Activated CD8-positive, alpha-beta memory T cell treated with anti-CD3 and anti-CD28 coated beads, Interleukin-2, amount 10 ng/mL, durations not matched to agents 7 days and 5 days (primary cell): ENCODE measurements at regions of chr1 and their contacts with region 1.

Region 1: GRCh38 chr1:183655562-183656075 is 2.5 kb upstream of the APOBEC4 start:
- DNase-seq: peak; percentile 79
- ATAC-seq: peak; percentile 62
- H3K4me3 Mint-ChIP-seq: no peak overlapping the region
- H3K27ac Mint-ChIP-seq: no peak overlapping the region
- H3K4me1 Mint-ChIP-seq: peaks cover 37% of the 10 kb centered on the region
- H3K27me3 Mint-ChIP-seq: peaks cover 2% of the 10 kb centered on the region

Region 2: DNA sequence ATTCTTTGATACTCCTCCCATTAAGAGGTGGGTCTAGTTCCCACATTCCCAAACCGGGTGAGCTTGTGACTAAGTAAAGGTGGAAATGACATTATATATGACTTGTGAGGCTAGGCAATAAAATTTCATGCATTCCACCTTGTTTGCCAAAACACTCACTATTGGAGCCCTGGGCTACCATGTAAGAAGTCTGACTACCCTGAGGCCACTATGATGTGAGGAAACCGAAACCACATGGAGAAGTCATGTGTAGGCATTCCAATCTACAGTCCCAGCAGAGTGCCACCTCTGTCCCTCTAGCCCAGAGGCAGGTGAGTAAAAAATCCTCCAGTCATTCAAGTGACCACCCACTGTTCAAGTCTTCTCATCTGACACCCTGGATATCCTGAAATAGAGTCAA is 201.2 kb before region 1 on chr1:
- CTCF ChIA-PET with region 1: no interaction called
- DNase-seq: no peak
- ATAC-seq: no peak
- H3K4me3 Mint-ChIP-seq: no peak overlapping the region
- H3K27ac Mint-ChIP-seq: no peak overlapping the region
- H3K4me1 Mint-ChIP-seq: no peaks in the 10 kb centered on the region
- H3K27me3 Mint-ChIP-seq: peaks cover 23% of the 10 kb centered on the region

Region 3: DNA sequence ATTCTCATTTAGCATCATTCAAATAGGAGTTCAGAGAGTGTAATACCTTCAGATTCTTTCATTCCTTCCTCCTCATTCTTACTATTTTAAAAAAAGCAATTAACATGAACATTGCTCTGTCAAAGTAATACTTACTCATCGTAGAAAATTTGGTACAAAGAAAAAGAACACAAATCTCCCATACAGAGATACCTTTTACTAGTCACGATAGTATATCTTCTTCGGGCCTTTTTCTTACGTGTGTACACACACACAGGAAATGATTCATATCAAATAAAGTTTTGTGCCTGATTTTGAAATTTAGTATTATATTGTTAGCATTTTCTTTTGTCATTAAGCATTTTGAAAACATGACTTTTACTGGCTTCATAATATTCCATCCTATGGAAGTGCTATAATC is 118.2 kb before region 1 on chr1:
- CTCF ChIA-PET with region 1: no interaction called
- DNase-seq: no peak
- ATAC-seq: no peak
- H3K4me3 Mint-ChIP-seq: no peak overlapping the region
- H3K27ac Mint-ChIP-seq: no peak overlapping the region
- H3K4me1 Mint-ChIP-seq: peaks cover 8% of the 10 kb centered on the region
- H3K27me3 Mint-ChIP-seq: no peaks in the 10 kb centered on the region

Region 4: DNA sequence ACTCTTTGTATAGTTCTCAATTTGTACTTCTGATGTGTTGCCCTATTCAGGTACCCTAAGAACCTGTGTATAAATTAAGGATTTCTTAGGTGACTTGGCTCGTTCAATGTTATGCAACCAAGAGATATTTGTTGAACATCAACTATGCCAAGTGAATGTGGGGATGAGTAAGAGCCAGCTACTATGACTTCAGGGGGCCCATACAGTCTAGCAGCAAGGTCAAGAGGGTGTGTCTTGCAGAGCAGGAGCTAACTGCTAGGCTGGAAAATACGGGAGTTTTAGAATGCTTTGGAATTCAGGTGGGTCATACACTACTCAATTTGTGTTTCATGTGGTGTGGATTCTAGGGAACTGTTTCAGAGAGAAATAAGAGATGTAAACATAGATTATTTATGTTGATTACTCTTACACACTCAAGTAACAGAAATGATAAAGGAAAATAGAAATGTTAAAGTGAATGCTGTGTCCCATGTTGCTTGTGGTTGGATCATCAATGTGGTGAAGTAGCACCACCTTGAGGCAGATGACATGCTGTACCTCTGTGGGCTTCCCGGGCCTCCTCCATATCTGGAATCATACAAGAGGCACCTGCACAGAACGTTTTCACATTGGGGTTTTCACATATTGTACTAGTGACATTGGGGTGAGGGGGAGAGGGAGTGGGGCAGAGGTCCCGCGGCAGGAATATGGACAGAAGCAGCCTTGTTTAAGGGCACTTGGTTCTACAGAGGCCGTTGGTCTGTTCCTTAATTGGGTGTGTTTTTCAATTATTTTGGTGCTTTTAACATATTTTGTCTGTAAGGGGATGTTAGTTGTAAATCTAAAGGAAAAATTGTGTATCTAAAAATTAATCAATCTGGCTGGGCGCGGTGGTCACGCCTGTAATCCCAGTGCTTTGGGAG is 32.5 kb before region 1 on chr1:
- CTCF ChIA-PET with region 1: no interaction called
- DNase-seq: peak; percentile 64
- ATAC-seq: peak; percentile 85
- H3K4me3 Mint-ChIP-seq: no peak overlapping the region
- H3K27ac Mint-ChIP-seq: no peak overlapping the region
- H3K4me1 Mint-ChIP-seq: peaks cover 4% of the 10 kb centered on the region
- H3K27me3 Mint-ChIP-seq: no peaks in the 10 kb centered on the region

Region 5: GRCh38 chr1:183635606-183636333 is 19.8 kb before region 1 on chr1 and contains the start of gene ARPC5:
- CTCF ChIA-PET with region 1: interaction called, 38 read pairs
- DNase-seq: peak; percentile 97
- ATAC-seq: peak; percentile 94
- H3K4me3 Mint-ChIP-seq: peak within 1 kb of the TSS; percentile 98
- H3K27ac Mint-ChIP-seq: peak within 1 kb of the TSS; percentile 100
- H3K4me1 Mint-ChIP-seq: peaks cover 30% of the 10 kb centered on the region
- H3K27me3 Mint-ChIP-seq: peaks cover 19% of the 10 kb centered on the region
- total RNA-seq, gene ARPC5: 205 to 216 TPM

Region 6: DNA sequence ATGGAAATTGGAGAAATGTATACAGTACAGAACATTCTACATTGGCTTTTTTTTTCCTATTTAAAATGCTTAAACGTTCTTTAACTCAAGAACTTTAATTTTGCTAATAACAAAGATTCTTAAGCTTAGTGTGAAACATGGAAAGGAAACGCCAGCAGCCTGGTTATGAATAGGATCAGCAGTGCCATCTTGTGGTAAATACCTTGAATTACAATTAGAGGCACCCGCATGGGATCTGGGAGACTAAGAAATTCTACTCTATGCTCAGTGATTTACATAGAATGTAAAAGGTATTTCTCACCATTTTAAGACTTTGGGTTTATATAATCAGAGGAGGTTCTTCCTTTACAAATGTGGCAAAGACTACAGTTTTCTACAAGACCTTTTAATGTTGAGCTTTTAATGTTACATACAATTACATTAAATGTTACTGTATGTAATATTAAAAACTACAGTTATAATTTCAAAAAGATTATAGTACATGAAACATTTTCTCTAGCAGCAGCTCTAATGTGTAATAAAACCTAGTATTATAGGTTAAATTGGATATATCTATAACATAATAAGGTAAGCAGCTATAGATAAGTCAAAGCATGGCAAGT is 29.6 kb after region 1 on chr1:
- CTCF ChIA-PET with region 1: interaction called, 41 read pairs
- DNase-seq: no peak
- ATAC-seq: no peak
- H3K4me3 Mint-ChIP-seq: no peak overlapping the region
- H3K27ac Mint-ChIP-seq: no peak overlapping the region
- H3K4me1 Mint-ChIP-seq: peaks cover 6% of the 10 kb centered on the region
- H3K27me3 Mint-ChIP-seq: peaks cover 35% of the 10 kb centered on the region

Region 7: DNA sequence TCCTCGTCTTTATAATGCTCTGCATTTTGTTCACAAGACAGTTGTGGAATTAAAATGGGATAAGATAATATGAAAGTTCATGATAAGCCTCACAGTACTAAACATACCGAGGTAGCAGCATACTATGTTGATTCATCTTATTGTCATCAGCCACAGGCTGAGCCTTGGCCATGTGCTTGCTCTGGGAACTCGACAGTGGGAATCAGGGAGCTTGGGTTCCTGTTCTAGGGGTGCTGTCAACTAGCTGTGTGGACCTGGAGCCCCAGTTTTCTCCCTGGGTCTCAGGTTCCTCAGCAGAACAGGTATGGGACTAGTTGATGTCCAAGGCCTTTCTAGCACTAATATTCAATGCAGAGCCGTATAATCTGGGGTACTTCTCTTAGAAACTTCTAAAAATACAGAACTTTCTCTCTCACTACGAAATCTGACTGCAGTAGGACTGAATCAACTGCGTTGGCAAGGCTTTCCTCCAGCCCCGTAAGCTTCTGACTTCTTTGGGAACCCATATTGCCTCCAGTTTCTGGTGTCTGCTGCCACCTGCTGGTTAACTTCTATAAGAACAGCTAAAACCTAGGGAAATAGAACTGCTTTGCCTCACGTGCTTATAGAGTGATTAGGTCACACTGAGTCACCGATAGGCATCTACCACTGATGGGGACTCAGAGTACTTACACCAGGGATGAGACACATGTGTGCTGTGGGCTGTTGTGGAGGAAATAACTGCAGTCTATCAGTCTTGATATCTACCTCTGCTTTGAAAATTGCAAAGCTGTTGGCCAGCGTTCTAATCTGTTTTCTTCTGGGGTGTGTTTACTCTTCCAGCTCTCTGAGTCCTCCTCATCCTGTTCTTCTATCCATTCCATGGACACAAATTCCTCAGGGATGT is 260.2 kb after region 1 on chr1:
- CTCF ChIA-PET with region 1: interaction called, 104 read pairs
- DNase-seq: peak; percentile 84
- ATAC-seq: peak; percentile 100
- H3K4me3 Mint-ChIP-seq: no peak overlapping the region
- H3K27ac Mint-ChIP-seq: peak overlapping the region; percentile 42
- H3K4me1 Mint-ChIP-seq: peaks cover 21% of the 10 kb centered on the region
- H3K27me3 Mint-ChIP-seq: peaks cover 3% of the 10 kb centered on the region